Activated naive CD8-positive, alpha-beta T cell treated with anti-CD3 and anti-CD28 coated beads, Interleukin-2, amount 10 ng/mL, durations not matched to agents 7 days and 5 days (primary cell): ENCODE measurements at regions of chr1 and their contacts with region 1.

Region 1: DNA sequence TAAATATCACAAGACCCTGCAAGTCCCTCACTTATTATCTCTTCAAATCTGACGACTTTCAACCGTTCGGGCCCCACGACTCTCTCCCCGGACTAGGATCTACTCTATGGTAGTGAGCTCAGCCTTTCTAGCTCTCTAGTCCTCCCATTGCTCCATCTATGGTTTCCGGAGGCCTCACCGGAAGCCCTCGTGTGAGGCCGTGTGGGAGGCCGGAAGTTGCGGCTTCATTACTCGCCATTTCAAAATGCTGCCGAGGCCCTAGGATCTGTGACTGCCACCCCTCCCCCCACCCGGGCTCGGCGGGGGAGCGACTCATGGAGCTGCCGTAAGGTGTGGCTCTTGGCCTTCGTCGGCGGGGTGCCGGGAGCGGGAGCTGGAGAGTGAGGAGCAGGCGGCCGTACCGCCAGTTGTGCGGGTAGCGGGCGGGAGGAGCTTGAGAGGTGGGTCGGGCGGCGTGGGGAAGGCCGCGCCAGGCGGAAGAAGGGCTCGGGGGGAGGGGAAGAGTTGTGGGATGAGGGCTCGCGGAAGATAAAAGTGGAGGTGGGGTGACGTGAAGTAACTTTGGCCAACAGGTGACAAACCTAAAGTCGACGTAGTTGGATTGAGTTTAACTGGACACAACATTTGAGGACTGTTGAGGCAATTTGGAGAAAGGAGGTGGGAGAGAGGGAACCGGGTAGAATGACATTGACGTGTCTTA is at the start of gene MDM4:
- DNase-seq: peak; percentile 95
- ATAC-seq: peak; percentile 83
- H3K4me3 Mint-ChIP-seq: no peak within 1 kb of the TSS
- H3K27ac Mint-ChIP-seq: no peak within 1 kb of the TSS
- H3K4me1 Mint-ChIP-seq: peaks cover 50% of the 10 kb centered on the region
- H3K27me3 Mint-ChIP-seq: no peaks in the 10 kb centered on the region
- total RNA-seq, gene MDM4: 118 to 143 TPM

Region 2: GRCh38 chr1:204408074-204408507 is 108.2 kb before region 1 on chr1:
- POLR2A ChIA-PET with region 1: interaction called, 10 read pairs
- DNase-seq: no peak
- ATAC-seq: no peak
- H3K4me3 Mint-ChIP-seq: peak overlapping the region; percentile 96
- H3K27ac Mint-ChIP-seq: peak overlapping the region; percentile 99
- H3K4me1 Mint-ChIP-seq: peaks cover 23% of the 10 kb centered on the region
- H3K27me3 Mint-ChIP-seq: no peaks in the 10 kb centered on the region

Region 3: DNA sequence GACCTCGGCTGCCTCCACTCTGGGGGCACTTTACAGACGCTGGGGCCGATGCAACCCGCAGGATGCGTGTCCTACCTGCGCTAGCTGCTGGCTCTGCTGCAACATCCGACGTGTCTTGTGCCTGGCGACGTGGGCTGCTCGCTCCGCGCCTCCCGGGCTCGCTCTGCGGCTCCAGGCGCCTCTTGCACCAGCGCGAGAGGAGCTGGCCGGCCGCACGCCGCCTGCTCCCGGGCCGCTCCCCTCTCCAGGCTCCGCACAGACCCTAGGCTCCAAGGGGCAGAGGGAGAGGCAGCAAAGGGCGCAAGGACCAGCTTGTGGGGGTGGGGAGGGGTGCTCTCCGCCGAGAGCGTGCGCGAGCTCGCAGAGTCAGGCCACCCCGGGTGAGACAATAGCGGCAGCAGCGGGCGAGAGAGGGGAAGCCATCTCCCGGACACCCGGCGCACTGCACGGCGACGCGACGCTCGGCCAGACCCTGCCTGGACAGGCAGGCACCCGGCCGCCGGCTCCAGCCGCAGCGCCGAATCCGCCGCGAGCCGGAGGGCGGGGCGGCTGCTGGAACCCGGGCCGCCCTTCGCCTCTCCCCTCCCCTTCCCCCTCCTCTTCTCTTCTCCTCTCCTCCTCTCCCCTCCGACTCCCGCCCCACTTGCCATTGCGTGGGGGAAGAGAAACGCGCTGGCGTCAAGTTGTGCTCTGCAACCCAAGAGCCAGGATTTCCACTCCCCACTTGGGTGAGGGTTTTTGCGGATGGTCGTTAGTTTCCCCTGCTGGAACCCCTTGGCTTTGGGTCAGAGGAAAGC is 21.9 kb before region 1 on chr1 and contains the start of gene PIK3C2B:
- POLR2A ChIA-PET with region 1: interaction called, 23 read pairs
- DNase-seq: peak; percentile 83
- ATAC-seq: peak; percentile 78
- H3K4me3 Mint-ChIP-seq: peak within 1 kb of the TSS; percentile 95
- H3K27ac Mint-ChIP-seq: peak within 1 kb of the TSS; percentile 91
- H3K4me1 Mint-ChIP-seq: peaks cover 44% of the 10 kb centered on the region
- H3K27me3 Mint-ChIP-seq: no peaks in the 10 kb centered on the region
- total RNA-seq, gene PIK3C2B: 37.1 to 41.8 TPM

Region 4: DNA sequence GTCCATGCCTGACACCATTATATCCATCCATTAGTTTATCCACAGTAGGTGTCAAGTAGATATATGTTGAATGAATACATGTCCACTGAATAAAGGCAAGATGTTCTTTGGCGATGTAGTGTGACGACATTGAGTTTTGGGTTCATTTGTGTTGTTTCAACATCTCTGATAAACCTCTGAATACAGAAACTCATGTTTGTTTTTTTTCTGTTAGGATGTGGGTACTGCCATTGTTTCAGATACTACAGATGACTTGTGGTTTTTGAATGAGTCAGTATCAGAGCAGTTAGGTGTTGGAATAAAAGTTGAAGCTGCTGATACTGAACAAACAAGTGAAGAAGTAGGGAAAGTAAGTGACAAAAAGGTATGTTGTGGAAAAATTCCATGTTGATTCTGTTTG is 28.0 kb after region 1 on chr1:
- POLR2A ChIA-PET with region 1: interaction called, 49 read pairs
- DNase-seq: no peak
- ATAC-seq: peak; percentile 91
- H3K4me3 Mint-ChIP-seq: peak overlapping the region; percentile 72
- H3K27ac Mint-ChIP-seq: peak overlapping the region; percentile 87
- H3K4me1 Mint-ChIP-seq: peaks cover 47% of the 10 kb centered on the region
- H3K27me3 Mint-ChIP-seq: no peaks in the 10 kb centered on the region

Region 5: DNA sequence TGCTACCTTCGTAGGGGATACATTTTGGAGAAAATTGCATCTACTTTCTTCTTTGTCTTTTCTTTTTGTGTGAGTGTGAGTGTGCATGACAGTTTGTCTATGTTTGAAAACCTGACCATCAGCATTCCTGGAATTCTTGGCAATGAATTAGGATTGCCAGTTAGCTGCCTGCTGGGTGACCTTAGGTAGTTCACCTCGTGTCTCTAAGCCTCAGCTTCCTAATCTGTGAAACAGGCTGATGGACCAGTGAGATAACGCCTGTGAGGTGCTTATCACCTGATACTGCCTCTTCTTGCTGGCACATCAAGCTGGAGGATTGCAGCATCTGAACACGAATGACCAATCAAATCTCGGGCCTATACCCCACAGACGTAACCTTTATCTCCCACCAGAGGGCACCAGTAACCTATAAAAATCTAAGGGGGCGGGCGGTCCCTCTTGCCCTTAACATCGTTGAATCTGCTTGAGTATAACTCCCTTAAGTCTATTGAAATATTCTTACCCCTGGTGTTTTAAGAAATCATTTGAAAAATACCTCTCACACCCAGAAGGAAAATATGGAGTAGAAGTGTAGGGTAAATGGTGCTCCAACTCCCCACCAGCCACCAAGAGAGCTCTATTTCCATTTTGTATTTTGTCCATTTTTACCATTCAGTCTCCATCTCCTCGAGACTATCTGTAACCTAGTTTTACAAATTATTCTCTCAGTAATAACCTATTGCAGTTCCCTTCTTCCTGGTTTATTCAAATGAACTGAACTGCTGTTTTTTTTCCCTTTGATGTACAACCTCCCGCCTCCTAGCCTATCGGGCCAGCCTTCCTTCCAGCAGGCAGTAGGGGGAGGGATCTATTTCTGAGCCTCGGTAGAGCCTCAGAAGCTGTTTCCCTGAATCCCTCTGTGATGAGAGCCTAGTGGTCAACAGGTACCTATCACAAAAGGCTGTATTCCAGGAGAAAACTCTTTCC is 49.6 kb after region 1 on chr1:
- POLR2A ChIA-PET with region 1: interaction called, 19 read pairs
- DNase-seq: no peak
- ATAC-seq: peak; percentile 79
- H3K4me3 Mint-ChIP-seq: peak overlapping the region; percentile 7
- H3K27ac Mint-ChIP-seq: peak overlapping the region; percentile 81
- H3K4me1 Mint-ChIP-seq: peaks cover 42% of the 10 kb centered on the region
- H3K27me3 Mint-ChIP-seq: no peaks in the 10 kb centered on the region

Region 6: DNA sequence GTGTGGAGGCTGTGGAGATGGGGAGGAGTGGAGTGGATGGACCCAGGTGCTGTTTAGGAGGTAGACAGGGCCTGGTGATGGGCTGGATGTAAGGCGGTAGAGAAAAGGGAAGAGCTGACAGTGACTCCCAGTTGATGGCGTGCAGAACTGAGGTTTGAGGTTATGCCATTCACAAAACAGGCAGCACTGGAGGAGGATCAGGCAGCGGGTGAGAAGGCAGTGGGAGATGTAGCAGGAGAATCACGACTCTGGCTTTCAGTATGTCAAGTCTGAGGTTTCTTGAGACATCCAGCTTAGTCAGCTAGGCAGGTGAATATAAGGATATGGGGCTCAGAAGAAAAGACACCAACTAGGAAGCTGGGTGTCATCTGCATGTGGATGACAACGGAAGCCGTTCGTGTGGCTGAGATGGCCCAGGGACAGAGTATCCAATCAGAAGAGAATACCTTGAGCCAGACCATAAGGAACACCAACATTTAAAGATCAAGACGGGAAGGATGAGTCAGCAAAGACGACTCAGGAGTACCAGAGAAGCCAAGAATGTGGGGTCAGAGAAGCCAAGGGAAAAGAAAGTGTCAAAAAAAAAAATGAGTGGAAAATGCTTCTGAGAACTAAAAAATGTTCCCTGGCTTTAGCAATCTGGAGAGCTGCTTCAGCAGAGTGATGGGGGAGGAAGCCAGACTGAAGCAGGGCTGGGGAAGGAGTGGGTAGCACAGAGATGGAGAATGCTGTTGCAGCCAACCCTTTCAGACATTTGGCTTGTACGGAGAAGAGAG is 154.0 kb after region 1 on chr1:
- POLR2A ChIA-PET with region 1: no interaction called
- DNase-seq: no peak
- ATAC-seq: no peak
- H3K4me3 Mint-ChIP-seq: no peak overlapping the region
- H3K27ac Mint-ChIP-seq: no peak overlapping the region
- H3K4me1 Mint-ChIP-seq: no peaks in the 10 kb centered on the region
- H3K27me3 Mint-ChIP-seq: no peaks in the 10 kb centered on the region